ENCODE measurements at regions of chr1 and their contacts with region 1.

Region 1: DNA sequence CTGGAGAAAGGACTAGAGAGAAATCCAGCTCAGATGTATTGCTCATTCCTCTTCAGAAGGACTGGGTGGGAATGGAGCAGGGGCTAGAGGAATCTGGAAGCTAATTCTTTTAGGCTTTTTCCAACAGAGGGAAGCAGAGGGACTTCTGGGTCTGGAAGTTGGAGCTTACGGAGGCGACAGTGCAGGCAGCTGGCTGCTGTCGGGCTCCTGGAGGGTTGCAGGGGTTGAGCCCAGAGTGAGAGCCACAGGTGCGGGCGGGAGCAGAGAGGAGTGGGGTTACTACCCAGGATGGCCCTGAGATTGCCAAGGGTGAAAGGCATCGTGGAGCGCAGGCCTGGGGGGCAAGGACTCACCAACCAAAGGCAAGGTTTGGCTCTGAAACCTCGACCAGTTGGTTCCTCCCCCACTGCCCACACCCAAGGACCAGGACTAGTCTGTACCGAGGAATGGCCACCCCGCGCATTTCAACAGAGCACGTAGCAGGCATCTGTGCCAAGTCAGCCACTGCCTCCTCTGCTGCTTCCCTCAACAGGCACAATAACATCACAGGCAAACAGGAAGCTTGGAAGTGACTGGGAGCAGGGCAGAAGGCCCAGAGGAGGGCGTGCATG is 22.7 kb upstream of the EDN2 start:
- DNase-seq: no peak
- ATAC-seq: peak; percentile 64
- H3K4me3 Mint-ChIP-seq: no peak overlapping the region
- H3K27ac Mint-ChIP-seq: no peak overlapping the region
- H3K4me1 Mint-ChIP-seq: peaks cover 18% of the 10 kb centered on the region
- H3K27me3 Mint-ChIP-seq: no peaks in the 10 kb centered on the region
- CTCF ChIP-seq: no peak

Region 2: DNA sequence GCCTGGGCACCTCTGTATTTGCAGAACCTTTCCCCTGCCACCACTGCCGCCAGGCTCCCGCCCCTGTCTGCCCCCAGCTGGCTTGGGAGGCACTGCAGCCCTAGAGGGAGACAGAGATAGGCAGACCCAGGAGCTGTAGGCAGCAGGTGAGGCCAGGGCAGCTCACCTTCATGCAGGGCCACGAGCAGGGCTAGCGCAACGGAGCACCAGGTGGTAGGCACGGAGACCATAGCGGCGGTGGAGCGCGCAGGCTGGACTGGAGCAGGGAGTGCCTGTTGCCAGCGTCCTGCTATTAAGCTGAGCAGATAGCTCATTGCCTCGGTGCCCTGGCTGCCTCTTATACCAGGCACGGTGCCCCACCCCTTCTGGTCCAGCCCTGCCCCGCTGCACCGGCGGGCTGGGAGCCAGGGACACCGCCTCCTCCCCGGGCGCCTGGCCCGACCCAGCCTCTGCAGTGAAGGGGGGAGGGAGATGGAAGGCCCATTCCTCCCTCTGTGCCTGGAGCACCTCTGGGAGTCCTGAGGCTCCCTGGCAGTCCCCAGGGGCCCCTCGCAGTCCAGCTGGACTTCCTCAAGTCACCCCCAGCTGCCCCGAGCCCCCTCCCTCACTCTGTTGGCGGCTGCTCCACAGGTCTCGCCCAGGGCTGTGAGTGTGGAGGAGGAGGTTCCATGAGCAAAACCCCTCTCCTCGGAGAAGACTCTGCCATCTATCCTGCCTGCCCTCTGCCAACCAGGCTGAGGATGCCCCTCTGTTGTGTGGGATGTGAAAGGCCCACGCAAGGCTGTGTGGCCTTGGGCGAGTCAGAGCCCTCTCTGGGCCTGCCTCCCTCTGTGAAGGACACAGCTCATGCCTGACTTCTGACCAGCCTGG is 22.6 kb before region 1 on chr1 and contains the start of gene EDN2:
- CTCF ChIA-PET with region 1: interaction called, 84 read pairs
- POLR2A ChIA-PET with region 1: no interaction called
- DNase-seq: peak; percentile 55
- ATAC-seq: peak; percentile 65
- H3K4me3 Mint-ChIP-seq: no peak within 1 kb of the TSS
- H3K27ac Mint-ChIP-seq: no peak within 1 kb of the TSS
- H3K4me1 Mint-ChIP-seq: peaks cover 44% of the 10 kb centered on the region
- H3K27me3 Mint-ChIP-seq: peaks cover 14% of the 10 kb centered on the region; the same call in 1 of the 2 replicates
- CTCF ChIP-seq: no peak
- total RNA-seq, gene EDN2: 0.33 to 0.39 TPM in 2 of 3 replicates, not detected in the other

Measured in WTC11 (cell line).